ENCODE measurements at regions of chr22 and their contacts with region 1.

Region 1: GRCh38 chr22:39502109-39502788 is at the start of gene MIEF1:
- DNase-seq: peak; percentile 91
- H3K4me3 ChIP-seq: peak within 1 kb of the TSS; percentile 66
- H3K27ac ChIP-seq: peak within 1 kb of the TSS in 1 of 2 experiments; percentile 62; a peak in 1 of 4 replicates
- H3K4me1 ChIP-seq: peaks cover 0 to 21% of the 10 kb centered on the region in 2 experiments; a peak in 2 of 4 replicates
- H3K27me3 ChIP-seq: no peaks in the 10 kb centered on the region
- CTCF ChIP-seq: no peak
- EP300 ChIP-seq: no peak
- RAD21 ChIP-seq: no peak
- polyA plus RNA-seq, gene MIEF1: 7.5 and 7.7 TPM in 2 replicates

Region 2: GRCh38 chr22:39414886-39415285 is 87.4 kb before region 1 on chr22:
- CTCF ChIA-PET with region 1: no interaction called
- POLR2A ChIA-PET with region 1: no interaction called
- DNase-seq: no peak
- H3K4me3 ChIP-seq: no peak overlapping the region
- H3K27ac ChIP-seq: no peak overlapping the region
- H3K4me1 ChIP-seq: no peaks in the 10 kb centered on the region; a peak in 1 of 4 replicates
- H3K27me3 ChIP-seq: no peaks in the 10 kb centered on the region
- CTCF ChIP-seq: no peak
- EP300 ChIP-seq: no peak
- RAD21 ChIP-seq: no peak

Region 3: DNA sequence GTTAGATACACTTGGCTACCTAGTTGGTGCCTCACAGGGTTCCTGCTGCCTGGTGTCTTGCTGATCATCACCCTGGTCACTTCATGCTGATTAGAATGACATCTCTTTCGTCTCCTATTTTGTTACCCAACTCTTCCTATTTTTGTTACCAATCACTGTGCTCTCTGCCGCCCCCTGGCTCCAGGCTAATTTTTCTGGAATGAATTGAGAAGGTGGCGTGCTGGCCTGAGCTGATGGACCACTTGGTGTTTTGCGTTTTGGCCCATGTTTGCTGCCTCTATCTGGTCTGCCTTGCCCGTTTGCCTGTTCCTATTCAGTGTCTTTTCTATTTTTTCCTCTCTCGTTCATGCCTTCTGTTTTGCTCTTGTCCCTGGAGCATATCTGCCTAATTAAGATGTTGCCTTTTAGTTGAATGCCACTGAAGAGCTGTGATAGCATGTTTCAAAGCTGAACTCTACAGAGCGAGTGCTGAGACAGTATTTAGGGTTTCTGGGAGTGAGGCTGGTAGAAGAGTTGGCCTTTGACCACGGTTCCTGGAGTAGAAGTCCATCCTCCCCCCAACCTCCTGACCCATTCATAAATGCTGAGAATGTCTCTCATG is 12.2 kb after region 1 on chr22:
- CTCF ChIA-PET with region 1: interaction called, 15 read pairs
- POLR2A ChIA-PET with region 1: interaction called, 14 read pairs
- DNase-seq: peak; percentile 47
- H3K4me3 ChIP-seq: no peak overlapping the region
- H3K27ac ChIP-seq: no peak overlapping the region
- H3K4me1 ChIP-seq: peaks cover 7 to 8% of the 10 kb centered on the region in 2 experiments; a peak in 2 of 4 replicates
- H3K27me3 ChIP-seq: no peaks in the 10 kb centered on the region
- CTCF ChIP-seq: peak; percentile 61
- EP300 ChIP-seq: no peak
- RAD21 ChIP-seq: peak; percentile 50

Region 4: DNA sequence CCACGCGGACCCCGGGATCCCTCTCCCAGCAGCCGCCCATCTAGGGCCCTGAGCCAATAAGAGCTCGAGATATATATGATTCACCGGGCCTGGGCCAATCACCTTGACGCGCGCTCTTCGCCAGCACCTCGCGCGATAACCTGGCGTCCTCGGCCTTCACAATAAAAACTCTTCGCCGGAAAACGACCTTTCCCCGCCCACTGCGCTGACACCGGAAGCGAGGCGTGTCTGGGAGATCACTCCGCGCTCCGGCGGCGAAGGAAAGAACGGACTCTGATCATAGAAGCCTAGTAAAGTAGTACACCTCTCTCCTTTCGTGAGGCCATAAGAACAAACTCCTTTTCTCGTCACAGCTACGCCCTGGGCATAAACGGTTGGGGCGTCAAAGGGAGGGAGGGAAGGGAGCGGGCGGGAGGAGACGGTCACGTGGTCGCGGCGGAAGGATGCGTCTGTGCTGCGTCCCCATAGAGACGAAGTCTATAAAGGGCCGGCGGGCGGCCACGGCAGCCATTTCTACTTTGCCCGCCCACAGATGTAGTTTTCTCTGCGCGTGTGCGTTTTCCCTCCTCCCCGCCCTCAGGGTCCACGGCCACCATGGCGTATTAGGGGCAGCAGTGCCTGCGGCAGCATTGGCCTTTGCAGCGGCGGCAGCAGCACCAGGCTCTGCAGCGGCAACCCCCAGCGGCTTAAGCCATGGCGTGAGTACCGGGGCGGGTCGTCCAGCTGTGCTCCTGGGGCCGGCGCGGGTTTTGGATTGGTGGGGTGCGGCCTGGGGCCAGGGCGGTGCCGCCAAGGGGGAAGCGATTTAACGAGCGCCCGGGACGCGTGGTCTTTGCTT is 18.0 kb after region 1 on chr22 and contains the start of gene ATF4:
- CTCF ChIA-PET with region 1: interaction called, 15 read pairs
- POLR2A ChIA-PET with region 1: interaction called, 14 read pairs
- DNase-seq: peak; percentile 91
- H3K4me3 ChIP-seq: peak within 1 kb of the TSS; percentile 70 to 76
- H3K27ac ChIP-seq: peak within 1 kb of the TSS; percentile 92 to 93
- H3K4me1 ChIP-seq: peaks cover 8 to 21% of the 10 kb centered on the region in 2 experiments; a peak in 2 of 4 replicates
- H3K27me3 ChIP-seq: no peaks in the 10 kb centered on the region
- CTCF ChIP-seq: no peak
- EP300 ChIP-seq: no peak
- RAD21 ChIP-seq: no peak
- polyA plus RNA-seq, gene ATF4: 375 and 436 TPM in 2 replicates

Measured in SK-N-SH (cell line).